Left ventricle myocardium superior (tissue), 1 donor: ENCODE measurements at regions of chr12 and their contacts with region 1.

Region 1: DNA sequence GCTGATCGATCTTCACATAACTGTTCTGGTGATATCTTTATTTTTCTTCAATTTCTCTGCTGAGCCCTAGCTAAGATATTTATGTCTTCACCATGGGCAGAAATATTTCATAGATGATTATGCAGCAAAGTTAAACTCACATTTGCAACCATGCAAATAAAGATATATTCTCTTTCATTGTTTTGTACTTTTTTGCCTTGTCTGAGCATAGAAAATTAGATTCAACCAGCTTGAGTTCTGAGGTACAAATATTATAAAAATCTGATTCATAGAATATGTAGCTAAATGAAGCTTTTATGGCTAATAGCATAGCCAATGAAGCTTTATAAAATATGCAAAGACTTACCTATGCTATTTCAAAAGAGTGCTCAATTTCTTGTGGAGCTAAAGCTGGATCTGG is at the start of gene TAS2R13:
- DNase-seq: no peak
- ATAC-seq: no peak
- total RNA-seq, gene TAS2R13: 0.30 TPM

Region 2: DNA sequence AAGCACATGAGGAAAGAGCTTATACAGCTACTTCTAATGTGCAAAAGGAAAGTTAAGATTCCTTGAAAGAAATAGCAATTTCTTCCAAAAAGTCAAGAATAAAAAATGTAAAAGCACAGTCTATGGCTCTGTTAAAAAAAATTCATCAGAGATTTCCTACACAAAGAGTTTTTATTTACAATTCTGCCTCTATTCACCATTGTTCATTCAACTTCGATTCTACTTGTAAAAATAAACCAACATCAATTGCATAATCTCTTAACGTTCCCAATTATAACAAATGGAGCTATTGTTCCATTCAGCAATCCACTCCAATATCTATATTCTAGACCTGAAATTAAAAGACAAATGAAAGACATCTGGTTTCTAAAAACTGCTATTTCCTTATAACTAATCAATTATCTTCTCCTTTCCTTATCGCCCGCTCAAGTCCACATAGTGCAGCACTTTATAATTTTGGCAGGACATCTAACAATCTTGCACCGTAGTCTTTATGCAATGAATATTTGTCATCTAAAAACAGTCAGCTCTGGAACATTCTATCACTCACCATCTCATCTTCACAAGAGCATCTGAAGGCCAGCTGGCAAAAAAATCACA is 397.6 kb before region 1 on chr12:
- intact Hi-C with region 1: no loop called
- DNase-seq: no peak
- ATAC-seq: no peak

Region 3: GRCh38 chr12:10952645-10953044 is 43.2 kb after region 1 on chr12:
- intact Hi-C with region 1: loop called (anchors 2 kb)
- DNase-seq: peak; percentile 51
- ATAC-seq: peak; percentile 100